CD14-positive monocyte (primary cell): ENCODE measurements at regions of chr3 and their contacts with region 1.

Region 1: DNA sequence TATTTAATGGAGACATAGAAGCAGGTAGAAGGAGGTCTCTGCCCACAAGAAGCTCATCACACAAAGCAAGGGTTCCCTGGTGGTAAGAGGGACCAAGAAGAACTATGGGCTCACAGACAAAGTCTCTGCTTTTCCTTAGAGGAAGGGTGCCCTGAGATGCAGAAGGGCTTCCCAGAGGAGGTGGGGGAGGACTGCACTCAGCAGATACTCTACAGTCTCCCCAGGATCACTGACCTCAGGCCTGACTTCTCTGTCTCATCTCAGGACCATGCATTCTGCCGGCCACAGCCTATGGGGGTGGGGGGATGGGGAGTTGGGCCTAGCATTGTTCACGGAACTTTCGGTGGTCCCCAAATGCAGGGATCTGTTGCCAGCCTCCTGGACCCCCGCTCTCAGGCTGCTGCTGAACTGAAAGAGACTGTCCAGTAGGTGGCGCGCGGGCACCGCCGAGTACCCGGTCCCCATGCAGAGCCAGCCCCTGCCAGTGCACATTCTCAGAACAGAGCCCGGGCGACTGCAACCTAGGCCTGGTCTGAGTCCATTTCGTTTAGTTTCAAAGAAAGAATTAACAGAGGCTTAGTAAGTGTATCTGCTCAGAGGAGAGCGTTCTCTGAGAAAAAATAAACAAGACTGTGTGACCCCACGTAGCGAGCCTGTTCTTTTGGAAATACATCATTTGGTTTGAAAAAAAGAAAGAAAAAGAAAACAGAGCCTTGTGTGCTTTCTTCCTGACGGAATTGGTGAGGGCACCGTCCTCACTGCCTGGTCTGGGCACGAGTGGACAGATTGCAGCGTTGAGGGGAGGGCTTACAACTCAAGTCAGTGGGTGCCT is 74.1 kb downstream of the LRTM1 start:
- DNase-seq: peak; percentile 18 to 33 (median 19)
- H3K4me3 ChIP-seq: no peak overlapping the region
- H3K4me3 Mint-ChIP-seq: no peak overlapping the region
- H3K27ac ChIP-seq: no peak overlapping the region
- H3K27ac Mint-ChIP-seq: no peak overlapping the region
- H3K4me1 ChIP-seq: no peaks in the 10 kb centered on the region
- H3K4me1 Mint-ChIP-seq: no peaks in the 10 kb centered on the region
- H3K27me3 ChIP-seq: no peaks in the 10 kb centered on the region
- H3K27me3 Mint-ChIP-seq: peaks cover 1 to 8% (median 5%) of the 10 kb centered on the region in 3 donors
- CTCF ChIP-seq: peak; percentile 93

Region 2: GRCh38 chr3:55169608-55170010 is 315.8 kb after region 1 on chr3:
- intact Hi-C with region 1: loop called in 1 of 2 experiments (anchors 10 kb)
- DNase-seq: no peak
- H3K4me3 ChIP-seq: no peak overlapping the region
- H3K4me3 Mint-ChIP-seq: no peak overlapping the region
- H3K27ac ChIP-seq: no peak overlapping the region
- H3K27ac Mint-ChIP-seq: peak overlapping the region in 1 of 7 donors; percentile 20
- H3K4me1 ChIP-seq: no peaks in the 10 kb centered on the region
- H3K4me1 Mint-ChIP-seq: no peaks in the 10 kb centered on the region
- H3K27me3 ChIP-seq: no peaks in the 10 kb centered on the region
- H3K27me3 Mint-ChIP-seq: no peaks in the 10 kb centered on the region
- CTCF ChIP-seq: no peak

Region 3: DNA sequence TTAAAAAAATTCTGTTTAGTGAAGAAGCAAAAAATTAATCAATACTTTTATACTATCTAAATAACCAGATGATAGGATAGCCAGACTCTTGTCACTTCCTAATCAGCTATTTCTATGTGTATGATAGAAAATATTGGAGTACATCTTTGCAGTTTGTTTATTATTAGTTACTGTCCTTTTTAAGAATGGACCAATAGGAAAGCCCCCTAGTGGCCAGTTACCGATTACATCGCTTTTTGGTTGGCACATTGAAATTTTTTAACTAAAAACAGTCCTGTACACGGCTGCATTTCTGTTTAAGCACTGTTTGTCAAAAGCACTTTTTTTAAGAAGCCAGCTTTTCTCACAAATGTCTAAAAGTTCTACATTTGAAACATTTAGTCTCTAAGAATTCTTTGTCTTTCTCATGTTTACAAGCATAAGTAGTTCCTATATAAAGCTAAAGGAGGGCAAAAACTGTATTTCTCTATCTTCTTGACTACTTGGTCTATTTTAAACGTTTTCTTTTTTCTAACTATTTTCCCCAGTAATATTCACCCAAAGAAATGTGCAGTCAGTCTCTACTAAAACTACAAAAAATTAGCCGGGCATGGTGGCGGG is 327.2 kb after region 1 on chr3:
- intact Hi-C with region 1: loop called (anchors 5 to 10 kb)
- DNase-seq: peak in 2 of 3 donors; percentile 13 to 30
- H3K4me3 ChIP-seq: no peak overlapping the region
- H3K4me3 Mint-ChIP-seq: no peak overlapping the region
- H3K27ac ChIP-seq: no peak overlapping the region
- H3K27ac Mint-ChIP-seq: no peak overlapping the region
- H3K4me1 ChIP-seq: no peaks in the 10 kb centered on the region
- H3K4me1 Mint-ChIP-seq: no peaks in the 10 kb centered on the region
- H3K27me3 ChIP-seq: no peaks in the 10 kb centered on the region
- H3K27me3 Mint-ChIP-seq: peaks cover 2 to 5% (median 2%) of the 10 kb centered on the region in 3 donors
- CTCF ChIP-seq: peak; percentile 87

Region 4: GRCh38 chr3:56251343-56251945 is 1397.7 kb after region 1 on chr3:
- intact Hi-C with region 1: loop called (anchors 10 kb)
- DNase-seq: peak; percentile 2 to 23 (median 15)
- H3K4me3 ChIP-seq: no peak overlapping the region
- H3K4me3 Mint-ChIP-seq: no peak overlapping the region
- H3K27ac ChIP-seq: no peak overlapping the region
- H3K27ac Mint-ChIP-seq: no peak overlapping the region
- H3K4me1 ChIP-seq: no peaks in the 10 kb centered on the region
- H3K4me1 Mint-ChIP-seq: no peaks in the 10 kb centered on the region
- H3K27me3 ChIP-seq: peaks cover 0 to 2% of the 10 kb centered on the region in 2 donors
- H3K27me3 Mint-ChIP-seq: peaks cover 0 to 6% (median 3%) of the 10 kb centered on the region in 3 donors
- CTCF ChIP-seq: peak; percentile 79